Calu3 (cell line): ENCODE measurements at regions of chr2 and their contacts with region 1.

Region 1: GRCh38 chr2:177263451-177264208 is 897 bp downstream of the NFE2L2 start:
- DNase-seq: peak; percentile 99
- H3K4me3 Mint-ChIP-seq: peak overlapping the region; percentile 82
- H3K27ac Mint-ChIP-seq: peak overlapping the region; percentile 96
- H3K4me1 Mint-ChIP-seq: peaks cover 26% of the 10 kb centered on the region
- H3K27me3 Mint-ChIP-seq: no peaks in the 10 kb centered on the region
- CTCF ChIP-seq: peak; percentile 88

Region 2: GRCh38 chr2:177143444-177143843 is 120.2 kb before region 1 on chr2:
- CTCF ChIA-PET with region 1: no interaction called
- intact Hi-C with region 1: no loop called
- DNase-seq: no peak
- H3K4me3 Mint-ChIP-seq: no peak overlapping the region
- H3K27ac Mint-ChIP-seq: no peak overlapping the region
- H3K4me1 Mint-ChIP-seq: peaks cover 5% of the 10 kb centered on the region
- H3K27me3 Mint-ChIP-seq: peaks cover 7% of the 10 kb centered on the region
- CTCF ChIP-seq: no peak

Region 3: GRCh38 chr2:177212106-177212890 is 51.3 kb before region 1 on chr2 and contains the start of gene HNRNPA3:
- CTCF ChIA-PET with region 1: interaction called, 4 read pairs
- intact Hi-C with region 1: loop called (anchors 2 kb)
- DNase-seq: peak; percentile 99
- H3K4me3 Mint-ChIP-seq: peak within 1 kb of the TSS; percentile 85
- H3K27ac Mint-ChIP-seq: peak within 1 kb of the TSS; percentile 100
- H3K4me1 Mint-ChIP-seq: peaks cover 23% of the 10 kb centered on the region
- H3K27me3 Mint-ChIP-seq: peaks cover 13% of the 10 kb centered on the region
- CTCF ChIP-seq: no peak
- total RNA-seq, gene HNRNPA3: 212 and 234 TPM in 2 replicates

Region 4: DNA sequence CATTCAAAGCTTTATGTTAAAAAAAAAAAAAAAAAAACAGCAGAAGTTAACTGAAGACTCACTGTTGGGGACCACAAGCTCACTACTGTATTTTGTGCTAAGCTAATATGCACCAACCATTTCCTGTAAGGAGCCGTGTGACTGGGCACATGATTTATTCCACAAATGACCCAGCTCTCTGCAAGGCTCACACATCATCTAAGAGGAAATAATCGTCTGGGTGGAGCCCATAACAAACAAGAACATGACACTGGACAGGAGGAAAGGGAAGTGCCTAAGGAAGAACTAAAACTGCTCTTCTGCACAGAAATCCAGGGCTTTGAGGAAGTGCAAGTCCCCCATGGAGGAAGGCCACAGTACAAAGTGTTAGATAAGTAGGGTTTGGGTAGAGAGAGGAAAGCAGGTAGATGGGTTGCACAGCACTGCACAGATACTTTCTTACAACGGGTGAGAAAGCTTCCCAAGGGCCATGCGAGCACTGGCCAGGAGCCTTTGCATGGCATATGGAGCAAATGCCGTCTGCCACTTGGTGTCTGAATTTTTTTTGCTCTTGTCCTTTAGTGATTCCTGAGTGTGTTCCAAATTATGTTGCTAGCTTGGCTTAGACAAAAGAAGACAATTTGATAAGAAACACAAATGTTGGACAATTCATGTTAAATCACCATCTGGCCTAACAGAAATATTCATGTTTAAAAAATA is 23.5 kb before region 1 on chr2:
- CTCF ChIA-PET with region 1: interaction called, 6 read pairs
- intact Hi-C with region 1: loop called (anchors 1 kb)
- DNase-seq: peak; percentile 53
- H3K4me3 Mint-ChIP-seq: peak overlapping the region; percentile 70
- H3K27ac Mint-ChIP-seq: peak overlapping the region; percentile 99
- H3K4me1 Mint-ChIP-seq: peaks cover 63% of the 10 kb centered on the region
- H3K27me3 Mint-ChIP-seq: no peaks in the 10 kb centered on the region
- CTCF ChIP-seq: no peak

Region 5: GRCh38 chr2:177296040-177296439 is 32.4 kb after region 1 on chr2:
- CTCF ChIA-PET with region 1: no interaction called
- intact Hi-C with region 1: loop called (anchors 1 kb)
- DNase-seq: no peak
- H3K4me3 Mint-ChIP-seq: no peak overlapping the region
- H3K27ac Mint-ChIP-seq: no peak overlapping the region
- H3K4me1 Mint-ChIP-seq: peaks cover 8% of the 10 kb centered on the region
- H3K27me3 Mint-ChIP-seq: no peaks in the 10 kb centered on the region
- CTCF ChIP-seq: peak; percentile 53

Region 6: GRCh38 chr2:177325270-177325929 is 61.8 kb after region 1 on chr2:
- CTCF ChIA-PET with region 1: no interaction called
- intact Hi-C with region 1: loop called (anchors 2 kb)
- DNase-seq: peak; percentile 20
- H3K4me3 Mint-ChIP-seq: no peak overlapping the region
- H3K27ac Mint-ChIP-seq: no peak overlapping the region
- H3K4me1 Mint-ChIP-seq: peaks cover 16% of the 10 kb centered on the region
- H3K27me3 Mint-ChIP-seq: no peaks in the 10 kb centered on the region
- CTCF ChIP-seq: no peak

Region 7: DNA sequence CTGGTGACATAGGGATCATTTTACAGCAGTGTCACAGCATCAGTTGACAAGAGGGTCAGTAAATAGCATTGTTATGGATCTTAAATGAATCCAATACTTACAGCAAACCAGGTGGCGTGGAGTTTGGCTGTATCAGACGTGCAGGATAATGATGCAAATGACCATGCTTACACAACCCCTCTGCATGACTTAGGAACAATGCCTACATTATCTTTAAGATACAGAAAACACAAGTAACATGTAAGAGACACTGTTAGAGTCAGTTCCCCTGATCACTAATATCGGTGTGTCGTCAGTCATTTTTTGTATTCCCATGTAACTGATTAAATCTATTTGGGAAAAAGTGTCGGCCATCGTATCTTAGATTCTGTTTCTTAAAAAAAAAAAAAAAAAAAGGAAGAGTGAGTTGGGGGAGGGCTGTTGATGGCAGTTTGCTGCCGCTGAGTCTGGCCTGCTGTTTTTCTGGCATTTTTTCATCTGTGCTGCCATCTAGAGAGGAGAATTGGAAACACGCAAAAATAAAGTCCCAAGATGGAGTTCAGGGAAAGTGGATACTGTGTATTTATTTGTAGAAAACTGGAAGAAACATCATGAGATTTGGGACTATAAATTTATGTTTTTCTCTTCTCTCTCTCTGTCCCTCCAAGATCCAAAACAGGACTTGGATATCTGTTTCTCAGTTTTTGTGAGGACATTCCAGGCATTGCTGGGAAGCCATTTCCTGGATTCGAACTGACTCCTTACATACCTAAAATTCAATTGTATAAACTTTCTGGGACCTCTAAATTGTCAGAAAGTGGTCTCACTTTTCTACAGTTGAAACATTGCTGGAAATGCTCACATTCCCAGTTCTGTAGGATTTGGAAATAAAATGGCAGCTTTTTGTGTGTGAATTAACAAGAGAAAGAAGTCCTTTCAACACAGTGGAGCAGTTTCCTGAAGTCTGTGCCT is 68.7 kb after region 1 on chr2:
- CTCF ChIA-PET with region 1: interaction called, 6 read pairs
- intact Hi-C with region 1: loop called (anchors 2 kb)
- DNase-seq: peak; percentile 53
- H3K4me3 Mint-ChIP-seq: no peak overlapping the region
- H3K27ac Mint-ChIP-seq: peak overlapping the region; percentile 34
- H3K4me1 Mint-ChIP-seq: peaks cover 27% of the 10 kb centered on the region
- H3K27me3 Mint-ChIP-seq: no peaks in the 10 kb centered on the region
- CTCF ChIP-seq: peak; percentile 63

Region 8: DNA sequence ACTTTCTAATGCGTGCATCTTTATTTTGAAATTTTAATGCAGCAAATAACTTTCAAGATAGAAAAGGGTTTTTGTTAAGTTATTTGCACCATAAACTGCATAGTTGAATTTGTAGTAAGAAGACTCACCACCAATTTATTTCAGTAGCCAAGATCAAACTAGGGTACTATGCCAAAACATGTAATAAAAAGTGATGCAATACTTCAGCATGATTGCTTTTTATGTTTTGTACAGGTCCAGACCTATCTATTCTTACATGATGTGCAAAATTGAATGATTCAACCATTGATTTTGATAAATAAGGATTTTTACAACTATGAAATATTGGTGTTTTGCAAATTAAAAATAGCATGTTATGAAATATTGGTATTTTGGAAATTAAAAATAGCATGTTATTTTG is 155.6 kb after region 1 on chr2:
- CTCF ChIA-PET with region 1: no interaction called
- intact Hi-C with region 1: loop called (anchors 1 kb)
- DNase-seq: no peak
- H3K4me3 Mint-ChIP-seq: no peak overlapping the region
- H3K27ac Mint-ChIP-seq: peak overlapping the region; percentile 55
- H3K4me1 Mint-ChIP-seq: peaks cover 40% of the 10 kb centered on the region
- H3K27me3 Mint-ChIP-seq: no peaks in the 10 kb centered on the region
- CTCF ChIP-seq: no peak

Region 9: GRCh38 chr2:177772529-177772928 is 508.9 kb after region 1 on chr2:
- CTCF ChIA-PET with region 1: no interaction called
- intact Hi-C with region 1: no loop called
- DNase-seq: peak; percentile 22
- H3K4me3 Mint-ChIP-seq: no peak overlapping the region
- H3K27ac Mint-ChIP-seq: no peak overlapping the region
- H3K4me1 Mint-ChIP-seq: peaks cover 31% of the 10 kb centered on the region
- H3K27me3 Mint-ChIP-seq: no peaks in the 10 kb centered on the region
- CTCF ChIP-seq: peak; percentile 72

Region 10: GRCh38 chr2:178650554-178650953 is 1386.9 kb after region 1 on chr2:
- CTCF ChIA-PET with region 1: no interaction called
- intact Hi-C with region 1: no loop called
- DNase-seq: no peak
- H3K4me3 Mint-ChIP-seq: no peak overlapping the region
- H3K27ac Mint-ChIP-seq: no peak overlapping the region
- H3K4me1 Mint-ChIP-seq: no peaks in the 10 kb centered on the region
- H3K27me3 Mint-ChIP-seq: no peaks in the 10 kb centered on the region
- CTCF ChIP-seq: no peak